ENCODE measurements at regions of chr11 and their contacts with region 1.

Region 1: GRCh38 chr11:116715383-116715782 is 57.4 kb downstream of the BUD13 start:
- DNase-seq: no peak
- H3K4me3 Mint-ChIP-seq: no peak overlapping the region
- H3K27ac Mint-ChIP-seq: no peak overlapping the region
- H3K4me1 Mint-ChIP-seq: no peaks in the 10 kb centered on the region
- H3K27me3 Mint-ChIP-seq: peaks cover 19% of the 10 kb centered on the region

Region 2: GRCh38 chr11:116263017-116263416 is 452.4 kb before region 1 on chr11:
- CTCF ChIA-PET with region 1: no interaction called
- DNase-seq: no peak
- H3K4me3 Mint-ChIP-seq: no peak overlapping the region
- H3K27ac Mint-ChIP-seq: no peak overlapping the region
- H3K4me1 Mint-ChIP-seq: no peaks in the 10 kb centered on the region
- H3K27me3 Mint-ChIP-seq: peaks cover 3% of the 10 kb centered on the region

Region 3: GRCh38 chr11:116732271-116733042 is 17.1 kb after region 1 on chr11:
- CTCF ChIA-PET with region 1: interaction called, 17 read pairs
- DNase-seq: peak; percentile 72
- H3K4me3 Mint-ChIP-seq: no peak overlapping the region
- H3K27ac Mint-ChIP-seq: no peak overlapping the region
- H3K4me1 Mint-ChIP-seq: peaks cover 3% of the 10 kb centered on the region
- H3K27me3 Mint-ChIP-seq: peaks cover 11% of the 10 kb centered on the region

Region 4: DNA sequence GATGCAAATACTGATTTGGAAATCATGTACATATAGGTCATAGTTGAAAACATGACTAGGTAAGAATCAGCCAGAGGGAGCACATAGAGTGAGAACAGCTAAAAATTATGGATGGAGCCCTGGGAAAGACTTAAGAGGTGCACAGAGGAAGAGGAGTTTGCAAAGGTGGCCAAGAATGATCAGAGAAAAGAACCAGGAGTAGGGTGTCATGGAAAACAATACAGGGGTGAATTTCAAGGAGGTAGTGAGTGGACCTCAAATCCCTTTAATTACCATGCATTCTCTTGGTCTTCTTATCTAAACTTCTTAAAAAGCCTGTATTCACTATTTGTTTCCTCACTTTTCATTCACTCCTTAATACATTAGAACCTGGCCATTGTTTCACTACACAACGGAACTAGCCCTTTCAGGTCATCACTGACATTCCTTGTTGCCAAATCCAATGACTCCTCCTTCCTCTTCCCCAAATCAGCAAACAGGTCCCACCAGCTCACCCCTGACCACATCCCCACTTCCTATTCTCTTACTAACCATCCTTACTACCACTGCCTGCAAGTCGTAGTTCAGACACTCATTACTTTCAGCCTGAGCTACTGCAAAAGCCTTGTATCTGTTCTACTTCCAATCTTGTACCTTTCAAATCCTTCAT is 34.8 kb after region 1 on chr11:
- CTCF ChIA-PET with region 1: no interaction called
- DNase-seq: no peak
- H3K4me3 Mint-ChIP-seq: no peak overlapping the region
- H3K27ac Mint-ChIP-seq: no peak overlapping the region
- H3K4me1 Mint-ChIP-seq: no peaks in the 10 kb centered on the region
- H3K27me3 Mint-ChIP-seq: no peaks in the 10 kb centered on the region